Activated T-helper 2 cell treated with anti-CD3 and anti-CD28 coated beads, Interferon-gamma antibody, Interleukin-2, Interleukin-4, amounts not matched to agents 10 μg/mL and 5 μg/mL and 100 μg/mL, durations not matched to agents 14 hours and 24 hours and 36 hours (primary cell): ENCODE measurements at regions of chr12 and their contacts with region 1.

Region 1: DNA sequence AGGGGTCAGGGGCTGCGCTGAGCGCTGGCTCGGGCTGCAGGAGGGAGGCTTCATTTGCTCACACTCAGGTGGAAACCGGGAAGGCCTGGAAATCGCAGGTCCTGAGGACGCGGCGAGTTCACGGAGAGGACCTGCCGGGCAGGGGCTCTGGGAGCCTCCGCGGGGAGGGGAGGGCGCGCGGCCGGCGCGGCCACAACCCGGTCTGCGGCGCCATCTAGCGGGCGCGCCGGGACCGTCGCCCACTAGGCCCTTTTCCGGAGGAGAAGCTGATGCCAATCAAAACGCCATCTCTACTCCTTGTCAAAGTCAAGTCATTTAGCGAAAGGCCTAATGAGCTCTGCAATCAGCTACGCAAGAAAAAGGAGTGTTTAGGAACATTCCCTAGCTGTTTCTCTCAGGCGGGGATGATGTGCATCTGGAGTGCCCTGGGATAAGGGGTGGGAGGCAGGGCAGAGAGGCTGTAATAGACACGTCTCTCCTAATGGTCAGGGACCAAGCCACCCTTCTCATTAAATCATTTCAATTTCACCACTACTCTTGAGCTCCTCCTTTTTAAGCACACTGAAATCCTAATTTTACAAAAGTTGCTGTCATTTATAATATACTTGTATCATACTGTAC is 885.8 kb upstream of the TMEM132C start:
- DNase-seq: peak; percentile 32
- H3K4me3 Mint-ChIP-seq: no peak overlapping the region
- H3K27ac Mint-ChIP-seq: no peak overlapping the region
- H3K4me1 Mint-ChIP-seq: peaks cover 5% of the 10 kb centered on the region
- H3K27me3 Mint-ChIP-seq: peaks cover 5% of the 10 kb centered on the region

Region 2: DNA sequence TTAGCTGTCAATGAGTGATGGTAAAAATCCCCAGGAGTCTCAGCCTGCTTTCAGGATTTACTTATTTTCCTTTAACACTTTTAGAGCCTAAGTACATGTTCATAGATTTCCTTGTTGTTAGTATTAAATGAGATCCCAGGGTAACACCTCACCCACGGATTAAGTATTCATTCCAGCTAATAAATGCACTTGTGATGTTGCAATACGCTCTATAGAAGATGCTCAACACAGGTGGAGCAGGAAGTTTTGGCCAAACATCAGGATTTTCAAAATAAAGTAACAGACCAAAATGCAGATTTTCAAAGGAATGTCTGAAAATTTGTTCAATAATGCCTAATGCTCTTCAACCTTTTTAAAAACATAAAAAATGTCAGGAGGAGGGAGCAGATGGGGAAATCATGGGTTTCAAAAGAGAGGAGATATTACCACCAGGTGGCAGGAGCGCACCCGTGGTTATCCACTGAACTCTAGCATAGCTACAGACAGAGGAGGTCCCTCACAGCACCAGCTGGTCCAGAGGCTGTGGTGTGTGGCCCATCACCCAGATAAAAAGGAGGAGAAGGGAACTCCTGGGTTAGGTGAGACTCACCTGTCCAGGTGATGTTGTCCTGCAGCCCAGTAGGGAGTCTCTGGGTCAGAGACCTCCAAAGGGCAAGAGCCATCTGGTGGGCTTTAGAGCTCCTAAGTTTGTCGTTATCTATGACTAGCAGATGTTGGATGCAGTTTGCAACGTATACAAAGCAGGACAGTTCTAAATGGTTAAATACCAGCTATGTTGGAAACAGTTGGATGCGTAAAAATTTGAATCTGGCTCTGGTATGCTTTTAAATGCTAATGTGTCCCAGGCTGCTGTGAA is 272.6 kb before region 1 on chr12:
- intact Hi-C with region 1: loop called (anchors 1 kb)
- DNase-seq: peak; percentile 15
- H3K4me3 Mint-ChIP-seq: no peak overlapping the region
- H3K27ac Mint-ChIP-seq: no peak overlapping the region
- H3K4me1 Mint-ChIP-seq: no peaks in the 10 kb centered on the region
- H3K27me3 Mint-ChIP-seq: no peaks in the 10 kb centered on the region

Region 3: GRCh38 chr12:127280393-127281275 is 100.5 kb before region 1 on chr12:
- intact Hi-C with region 1: loop called (anchors 2 kb)
- DNase-seq: peak; percentile 59
- H3K4me3 Mint-ChIP-seq: no peak overlapping the region
- H3K27ac Mint-ChIP-seq: no peak overlapping the region
- H3K4me1 Mint-ChIP-seq: no peaks in the 10 kb centered on the region
- H3K27me3 Mint-ChIP-seq: peaks cover 1% of the 10 kb centered on the region

Region 4: DNA sequence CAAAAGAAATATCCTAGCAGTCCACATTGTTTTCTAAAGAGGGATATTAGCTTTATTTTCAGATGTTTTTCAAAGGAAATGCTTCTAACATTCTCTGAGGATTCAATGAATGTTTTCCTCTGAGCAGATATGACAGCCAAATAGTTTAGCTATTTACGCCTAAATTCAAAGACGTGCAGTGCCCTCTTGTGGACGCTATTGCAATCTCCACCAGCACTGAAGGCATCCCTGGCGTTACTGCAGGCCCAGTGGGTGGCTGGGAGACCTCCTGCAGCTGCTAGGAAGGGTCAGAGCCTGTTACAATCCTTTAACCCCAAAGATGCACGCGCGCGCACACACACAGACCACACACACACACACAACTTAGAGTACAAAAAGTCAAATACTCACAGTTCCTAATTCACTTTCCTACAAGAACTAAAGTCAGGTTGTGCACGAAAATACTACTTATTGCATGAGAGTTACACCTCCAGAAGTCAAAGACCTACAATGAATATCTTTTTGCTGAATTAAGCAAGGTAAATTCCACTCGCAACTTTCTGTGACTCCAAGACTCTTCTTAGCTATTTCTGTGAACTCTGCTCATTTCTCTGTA is 296.5 kb after region 1 on chr12:
- intact Hi-C with region 1: loop called (anchors 2 kb)
- DNase-seq: peak; percentile 20
- H3K4me3 Mint-ChIP-seq: no peak overlapping the region
- H3K27ac Mint-ChIP-seq: no peak overlapping the region
- H3K4me1 Mint-ChIP-seq: no peaks in the 10 kb centered on the region
- H3K27me3 Mint-ChIP-seq: no peaks in the 10 kb centered on the region